Activated CD4-positive, alpha-beta T cell treated with anti-CD3 and anti-CD28 coated beads, Interleukin-2, amount 10 ng/mL, durations not matched to agents 24 days and 14 days (primary cell): ENCODE measurements at regions of chrX and their contacts with region 1.

Region 1: GRCh38 chrX:71652405-71652804 is 14.9 kb upstream of the LOC101059915 start:
- DNase-seq: peak; percentile 87
- H3K4me3 Mint-ChIP-seq: no peak overlapping the region
- H3K27ac Mint-ChIP-seq: no peak overlapping the region
- H3K4me1 Mint-ChIP-seq: peaks cover 18% of the 10 kb centered on the region
- H3K27me3 Mint-ChIP-seq: peaks cover 15% of the 10 kb centered on the region

Region 2: DNA sequence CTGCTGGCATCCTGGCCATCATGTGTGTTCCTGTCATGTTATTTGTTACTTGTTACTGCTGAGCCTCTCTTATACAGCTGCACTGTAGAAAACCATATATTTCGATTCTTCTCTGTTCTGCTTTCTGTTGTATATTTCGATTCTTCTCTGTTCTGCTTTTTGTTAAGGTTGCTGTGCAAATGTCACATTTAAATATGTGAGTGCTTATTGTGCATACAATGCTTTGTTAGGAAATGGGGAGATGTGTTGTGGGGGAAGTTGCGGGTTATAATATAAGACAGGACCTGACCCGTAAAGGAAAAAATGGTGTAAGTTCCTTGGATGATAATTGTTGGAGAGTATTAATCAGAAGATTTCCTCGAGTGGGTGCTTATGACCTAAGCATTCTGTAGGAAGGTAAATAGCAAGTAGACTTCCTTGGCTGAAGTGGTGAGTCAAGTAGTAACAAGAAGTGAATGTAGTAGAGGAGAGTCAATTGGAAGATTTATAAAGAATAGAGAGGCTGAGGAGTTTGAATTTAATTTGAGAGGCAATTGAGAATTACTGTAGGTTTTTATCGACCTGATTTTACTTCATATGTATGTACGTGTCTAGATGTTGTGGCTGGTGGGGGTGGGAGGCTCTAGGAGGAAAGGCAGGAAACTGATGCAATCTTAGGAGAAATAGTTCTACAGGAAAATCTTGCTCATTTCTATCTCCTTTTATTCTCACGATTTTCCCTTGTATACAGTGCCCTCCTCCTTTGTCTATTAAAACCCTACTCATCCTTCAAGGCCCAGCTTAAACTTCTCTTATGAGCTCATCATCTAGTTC is 111.0 kb before region 1 on chrX:
- intact Hi-C with region 1: loop called (anchors 5 kb)
- DNase-seq: peak; percentile 54
- H3K4me3 Mint-ChIP-seq: peak overlapping the region; percentile 100
- H3K27ac Mint-ChIP-seq: peak overlapping the region; percentile 95
- H3K4me1 Mint-ChIP-seq: peaks cover 41% of the 10 kb centered on the region
- H3K27me3 Mint-ChIP-seq: no peaks in the 10 kb centered on the region

Region 3: GRCh38 chrX:71563921-71564320 is 88.5 kb before region 1 on chrX:
- intact Hi-C with region 1: loop called (anchors 5 kb)
- DNase-seq: no peak
- H3K4me3 Mint-ChIP-seq: no peak overlapping the region
- H3K27ac Mint-ChIP-seq: no peak overlapping the region
- H3K4me1 Mint-ChIP-seq: peaks cover 2% of the 10 kb centered on the region
- H3K27me3 Mint-ChIP-seq: no peaks in the 10 kb centered on the region

Region 4: DNA sequence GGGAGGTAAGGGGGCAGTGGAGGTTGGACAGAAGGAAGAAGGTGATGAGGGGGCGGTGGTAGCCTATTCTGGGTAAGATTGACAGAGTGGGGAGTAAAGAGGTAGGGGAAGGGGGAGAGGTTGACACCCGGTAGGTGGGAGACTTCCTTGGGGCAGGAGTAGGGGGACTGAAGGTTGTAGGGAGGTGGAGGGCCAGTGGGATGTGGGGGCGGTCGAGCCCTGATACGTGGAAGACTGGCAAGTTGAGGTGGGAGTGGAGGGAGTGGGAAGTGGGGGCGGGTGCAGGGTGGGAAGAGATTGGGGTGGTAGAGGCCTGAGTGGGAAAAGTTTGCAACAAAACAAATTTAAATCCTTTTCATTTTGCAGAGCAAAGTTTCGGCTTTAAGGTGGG is 72.4 kb before region 1 on chrX:
- intact Hi-C with region 1: loop called (anchors 5 kb)
- DNase-seq: no peak
- H3K4me3 Mint-ChIP-seq: no peak overlapping the region
- H3K27ac Mint-ChIP-seq: peak overlapping the region; percentile 45
- H3K4me1 Mint-ChIP-seq: peaks cover 3% of the 10 kb centered on the region
- H3K27me3 Mint-ChIP-seq: no peaks in the 10 kb centered on the region

Region 5: GRCh38 chrX:71667328-71668247 is 15.2 kb after region 1 on chrX and contains the start of gene LOC101059915:
- intact Hi-C with region 1: no loop called
- DNase-seq: peak; percentile 36
- H3K4me3 Mint-ChIP-seq: no peak within 1 kb of the TSS
- H3K27ac Mint-ChIP-seq: no peak within 1 kb of the TSS
- H3K4me1 Mint-ChIP-seq: peaks cover 30% of the 10 kb centered on the region
- H3K27me3 Mint-ChIP-seq: peaks cover 3% of the 10 kb centered on the region

Region 6: DNA sequence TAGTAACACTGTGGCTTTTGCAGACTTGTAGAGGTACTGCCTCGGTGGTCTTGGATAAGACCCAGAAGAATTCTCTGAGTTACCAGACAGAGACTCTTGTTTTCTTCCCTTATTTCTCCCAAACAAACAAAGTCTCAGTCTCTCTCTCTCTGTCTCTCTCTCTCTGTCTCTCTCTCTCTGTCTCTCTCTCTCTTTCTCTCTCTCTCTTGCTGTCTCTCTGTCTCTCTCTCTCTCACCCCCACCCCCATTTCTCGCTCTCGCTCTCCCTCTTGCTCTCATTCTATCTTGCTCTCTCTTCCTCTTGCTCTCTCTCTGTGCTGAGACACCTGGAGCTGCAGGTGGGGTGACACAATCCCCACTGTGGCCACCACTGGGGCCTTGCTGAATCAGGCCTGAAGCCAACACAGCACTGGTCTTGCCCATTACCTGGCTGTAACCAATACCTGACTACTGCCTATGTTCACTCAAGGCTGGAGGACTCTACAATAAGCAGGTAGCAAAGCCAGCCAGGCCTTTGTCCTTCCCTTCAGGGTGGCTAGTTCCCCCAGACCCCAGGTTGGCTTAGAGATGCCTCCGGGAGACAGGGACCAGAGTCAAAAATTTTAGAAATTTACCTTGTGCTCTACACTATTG is 27.3 kb after region 1 on chrX:
- intact Hi-C with region 1: no loop called
- DNase-seq: peak; percentile 18
- H3K4me3 Mint-ChIP-seq: no peak overlapping the region
- H3K27ac Mint-ChIP-seq: no peak overlapping the region
- H3K4me1 Mint-ChIP-seq: no peaks in the 10 kb centered on the region
- H3K27me3 Mint-ChIP-seq: peaks cover 15% of the 10 kb centered on the region